ENCODE measurements at regions of chrX and their contacts with region 1.

Region 1: DNA sequence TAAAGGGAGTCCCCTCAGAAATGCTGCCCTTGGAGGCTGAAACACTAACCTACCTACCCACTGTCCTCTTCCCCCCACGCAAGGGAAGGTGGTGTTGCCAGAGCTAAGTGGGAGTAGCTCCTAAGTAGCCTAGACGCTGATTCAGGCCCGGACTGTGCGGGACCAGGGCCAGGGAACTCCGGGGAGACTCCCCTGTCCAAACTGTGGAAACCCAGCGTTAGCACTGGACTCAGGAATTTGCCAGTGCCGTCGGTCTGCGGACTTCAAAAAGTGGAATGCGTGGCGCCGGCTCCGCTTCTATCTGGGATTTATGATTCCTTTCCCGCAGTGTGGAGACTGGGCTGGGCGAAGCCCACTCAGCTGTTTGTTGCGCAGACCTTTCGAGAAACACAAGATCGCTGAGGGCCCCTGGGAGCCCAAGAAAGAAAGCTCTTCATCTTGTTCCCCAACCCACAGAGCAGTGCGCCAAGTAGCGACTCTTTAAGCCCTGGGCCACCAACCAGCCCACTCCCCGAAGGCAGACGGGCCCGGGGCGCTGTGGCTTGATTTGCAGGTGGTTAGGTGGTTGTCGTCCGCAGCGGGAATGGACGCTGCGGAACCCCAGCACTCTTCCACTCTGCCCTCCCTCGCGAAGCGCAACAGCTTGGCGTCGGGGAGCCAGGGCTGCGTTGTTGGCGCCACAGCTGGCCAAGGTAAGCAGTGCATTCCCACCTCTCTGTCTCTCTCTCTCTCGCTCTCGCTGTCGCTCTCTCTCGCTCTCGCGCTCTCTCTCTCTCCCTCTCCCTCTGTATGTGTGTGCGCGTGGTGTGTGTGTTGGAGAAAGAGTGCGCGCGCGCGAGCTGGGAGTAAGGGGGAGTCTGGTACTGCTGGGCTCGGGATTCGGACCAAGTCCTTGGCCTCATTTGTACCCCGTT is 2.0 kb downstream of the TMEM255A start:
- DNase-seq: peak; percentile 80
- H3K4me3 Mint-ChIP-seq: peak overlapping the region; percentile 79
- H3K27ac Mint-ChIP-seq: peak overlapping the region; percentile 15
- H3K4me1 Mint-ChIP-seq: peaks cover 7% of the 10 kb centered on the region
- H3K27me3 Mint-ChIP-seq: peaks cover 17% of the 10 kb centered on the region

Region 2: DNA sequence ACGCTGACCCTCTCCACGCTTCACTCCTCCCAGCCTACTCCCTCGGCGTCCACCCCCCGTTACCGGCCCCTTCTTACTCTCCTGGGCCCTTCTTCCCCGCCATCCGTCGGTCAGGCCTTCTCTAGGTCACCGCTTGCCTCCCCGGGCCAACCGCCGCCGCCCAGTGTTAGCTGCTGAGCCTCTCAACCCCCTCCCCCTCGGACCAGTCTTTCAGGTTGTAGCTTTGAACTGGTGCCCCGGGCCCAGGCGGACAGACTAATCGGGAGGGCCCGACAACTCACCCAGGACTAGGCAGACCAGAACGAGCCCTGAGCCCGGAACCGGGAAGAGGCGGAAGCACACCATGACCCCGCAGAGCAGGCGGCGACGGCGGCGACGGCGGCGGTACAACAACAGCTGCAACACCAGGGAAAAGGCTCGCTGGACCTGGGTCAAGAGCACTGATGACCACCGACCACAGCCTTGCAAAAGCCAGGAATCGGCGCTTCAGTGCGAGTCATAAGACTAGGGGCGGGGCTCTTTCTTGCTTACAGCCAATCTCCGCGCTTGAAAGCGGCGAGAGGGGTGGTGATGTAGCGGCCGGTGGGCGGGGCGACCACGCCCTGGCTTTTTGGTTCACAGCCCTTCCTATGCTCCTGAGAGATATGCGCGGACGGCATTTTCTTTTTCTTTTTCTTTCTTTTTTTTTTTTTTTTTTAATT is 159.8 kb after region 1 on chrX and contains the start of gene LAMP2:
- CTCF ChIA-PET with region 1: interaction called, 5 read pairs
- intact Hi-C with region 1: loop called (anchors 5 kb)
- DNase-seq: peak; percentile 87
- H3K4me3 Mint-ChIP-seq: peak within 1 kb of the TSS; percentile 86
- H3K27ac Mint-ChIP-seq: peak within 1 kb of the TSS; percentile 91
- H3K4me1 Mint-ChIP-seq: peaks cover 15% of the 10 kb centered on the region
- H3K27me3 Mint-ChIP-seq: no peaks in the 10 kb centered on the region
- total RNA-seq, gene LAMP2: 37.9 to 38.0 TPM

Region 3: DNA sequence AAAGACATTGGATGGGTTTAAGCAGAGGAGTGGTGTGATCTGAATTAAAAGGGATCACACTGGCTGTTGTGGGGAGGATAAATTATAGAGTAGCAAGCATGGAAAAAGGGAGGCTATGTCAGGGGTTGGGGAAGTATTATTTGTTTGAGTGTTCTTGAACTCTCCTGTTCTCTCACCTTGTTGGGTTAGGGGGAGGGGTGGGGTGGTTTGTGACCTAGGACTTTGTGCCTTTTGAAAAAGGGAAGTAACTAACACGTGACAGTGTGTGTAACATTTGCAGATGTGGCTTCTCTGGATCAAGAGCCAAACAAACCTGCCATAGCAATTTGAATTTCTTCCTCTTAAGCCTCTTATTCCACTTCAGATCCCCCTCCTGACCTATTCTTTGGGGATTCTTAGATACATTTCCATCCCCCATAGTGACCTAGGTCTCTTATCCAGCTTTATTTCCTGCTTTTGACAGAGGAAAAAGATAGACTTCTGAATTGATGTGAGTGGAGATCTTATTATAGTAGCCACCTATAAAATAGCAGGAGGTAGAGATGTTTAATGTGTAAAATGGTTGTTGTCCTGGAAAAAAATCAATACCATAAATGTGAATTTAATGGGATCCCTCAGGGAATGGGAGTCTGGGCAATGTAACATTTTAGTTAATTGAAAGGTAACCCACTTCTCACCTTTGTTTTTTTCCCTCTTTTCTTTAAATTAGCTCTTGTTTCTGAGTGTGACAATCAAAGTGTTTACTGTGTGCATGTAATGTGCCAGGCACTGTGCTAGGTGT is 446.0 kb after region 1 on chrX:
- CTCF ChIA-PET with region 1: no interaction called
- intact Hi-C with region 1: loop called (anchors 10 kb)
- DNase-seq: peak; percentile 40
- H3K4me3 Mint-ChIP-seq: no peak overlapping the region
- H3K27ac Mint-ChIP-seq: peak overlapping the region; percentile 67
- H3K4me1 Mint-ChIP-seq: peaks cover 45% of the 10 kb centered on the region
- H3K27me3 Mint-ChIP-seq: no peaks in the 10 kb centered on the region